Gastrocnemius medialis (tissue), 4 donors: ENCODE measurements at regions of chr19 and their contacts with region 1.

Region 1: GRCh38 chr19:16160943-16161560 is 12.3 kb downstream of the CIB3 start:
- DNase-seq: no peak
- ATAC-seq: no peak
- H3K4me3 ChIP-seq: no peak overlapping the region
- H3K27ac ChIP-seq: no peak overlapping the region
- H3K4me1 ChIP-seq: no peaks in the 10 kb centered on the region
- H3K27me3 ChIP-seq: no peaks in the 10 kb centered on the region
- CTCF ChIP-seq: no peak
- POLR2A ChIP-seq: no peak

Region 2: GRCh38 chr19:15584541-15585115 is 576.4 kb before region 1 on chr19:
- in situ Hi-C with region 1: loop called in 1 of 4 experiments (anchors 25 kb)
- intact Hi-C with region 1: no loop called
- DNase-seq: peak; percentile 17 to 29
- ATAC-seq: no peak
- H3K4me3 ChIP-seq: no peak overlapping the region
- H3K27ac ChIP-seq: no peak overlapping the region
- H3K4me1 ChIP-seq: no peaks in the 10 kb centered on the region
- H3K27me3 ChIP-seq: peaks cover 21 to 25% (median 23%) of the 10 kb centered on the region in 3 donors
- CTCF ChIP-seq: peak; percentile 47 to 76 (median 65)
- POLR2A ChIP-seq: no peak

Region 3: GRCh38 chr19:15623711-15624318 is 537.2 kb before region 1 on chr19:
- in situ Hi-C with region 1: loop called in 1 of 4 experiments (anchors 25 kb)
- intact Hi-C with region 1: no loop called
- DNase-seq: no peak
- ATAC-seq: no peak
- H3K4me3 ChIP-seq: no peak overlapping the region
- H3K27ac ChIP-seq: no peak overlapping the region
- H3K4me1 ChIP-seq: no peaks in the 10 kb centered on the region
- H3K27me3 ChIP-seq: peaks cover 0 to 5% (median 2%) of the 10 kb centered on the region in 3 donors
- CTCF ChIP-seq: no peak
- POLR2A ChIP-seq: no peak

Region 4: DNA sequence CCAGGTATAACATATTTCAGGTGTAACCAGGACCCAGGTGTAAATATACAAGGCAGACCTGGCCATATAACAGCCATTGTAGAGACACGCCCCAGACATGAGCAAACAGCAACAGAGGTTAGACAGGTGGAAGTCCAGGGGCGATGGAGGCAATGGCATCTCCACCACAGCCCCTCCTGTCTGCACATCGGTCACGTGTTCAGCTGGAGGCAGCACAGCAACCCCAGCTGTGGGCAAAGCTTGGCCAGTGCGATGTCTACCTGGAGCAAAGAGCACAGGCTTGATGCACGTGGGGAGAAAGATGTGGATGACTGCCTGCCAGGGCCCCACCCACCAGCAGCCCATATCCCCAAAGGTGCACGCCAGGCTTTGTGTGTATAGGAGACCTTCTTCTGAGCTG is 267.6 kb before region 1 on chr19:
- in situ Hi-C with region 1: no loop called
- intact Hi-C with region 1: no loop called
- DNase-seq: no peak
- ATAC-seq: no peak
- H3K4me3 ChIP-seq: no peak overlapping the region
- H3K27ac ChIP-seq: no peak overlapping the region
- H3K4me1 ChIP-seq: no peaks in the 10 kb centered on the region
- H3K27me3 ChIP-seq: peaks cover 0 to 2% (median 0%) of the 10 kb centered on the region in 3 donors
- CTCF ChIP-seq: no peak
- POLR2A ChIP-seq: no peak

Region 5: DNA sequence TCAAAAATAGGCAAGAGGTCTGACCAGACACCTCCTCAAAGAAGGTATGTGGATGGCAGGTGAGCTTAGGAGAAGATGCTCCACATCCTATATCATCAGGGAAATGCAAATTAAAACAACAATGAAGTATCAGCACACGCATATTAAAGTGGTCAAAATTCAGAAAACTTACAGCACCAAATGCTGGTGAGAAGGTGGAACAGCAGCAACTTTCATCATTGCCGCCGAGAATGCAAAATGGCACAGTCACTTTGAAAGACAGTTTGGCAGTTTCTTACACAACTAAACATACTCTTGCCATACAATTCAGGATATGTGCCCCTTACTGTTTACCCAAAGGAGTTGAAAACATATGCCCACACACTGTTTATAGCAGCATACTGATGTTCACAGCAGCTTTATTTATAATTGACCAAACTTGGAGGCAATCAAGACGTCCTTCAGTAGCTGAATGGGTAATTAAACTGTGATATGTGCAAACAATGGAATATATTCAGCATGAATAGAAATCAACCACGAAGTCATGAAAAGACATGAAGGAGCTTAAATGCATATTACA is 189.8 kb before region 1 on chr19:
- in situ Hi-C with region 1: no loop called
- intact Hi-C with region 1: no loop called
- DNase-seq: no peak
- ATAC-seq: no peak
- H3K4me3 ChIP-seq: no peak overlapping the region
- H3K27ac ChIP-seq: no peak overlapping the region
- H3K4me1 ChIP-seq: no peaks in the 10 kb centered on the region
- H3K27me3 ChIP-seq: no peaks in the 10 kb centered on the region
- CTCF ChIP-seq: no peak
- POLR2A ChIP-seq: no peak